ENCODE measurements at regions of chr10 and their contacts with region 1.

Region 1: GRCh38 chr10:124119946-124120345 is 26.5 kb upstream of the CHST15 start:
- DNase-seq: peak; percentile 98
- H3K4me3 ChIP-seq: no peak overlapping the region
- H3K27ac ChIP-seq: peak overlapping the region; percentile 87
- H3K4me1 ChIP-seq: peaks cover 21% of the 10 kb centered on the region
- H3K27me3 ChIP-seq: no peaks in the 10 kb centered on the region
- CTCF ChIP-seq: no peak
- POLR2A ChIP-seq: no peak

Region 2: GRCh38 chr10:124092860-124093773 is 26.8 kb before region 1 on chr10 and contains the start of gene CHST15:
- CTCF ChIA-PET with region 1: interaction called, 4 read pairs
- POLR2A ChIA-PET with region 1: no interaction called
- dilution Hi-C with region 1: no loop called
- intact Hi-C with region 1: loop called (anchors 1 kb)
- DNase-seq: peak; percentile 63
- H3K4me3 ChIP-seq: peak within 1 kb of the TSS; percentile 21 to 75 (median 25)
- H3K27ac ChIP-seq: no peak within 1 kb of the TSS
- H3K4me1 ChIP-seq: peaks cover 6% of the 10 kb centered on the region
- H3K27me3 ChIP-seq: peaks cover 4 to 47% of the 10 kb centered on the region in 2 experiments
- CTCF ChIP-seq: peak in 1 of 2 donors; percentile 29
- POLR2A ChIP-seq: no peak
- total RNA-seq, gene CHST15: 23.1 and 29.2 TPM in 2 replicates

Region 3: GRCh38 chr10:124289851-124290795 is 170.2 kb after region 1 on chr10:
- CTCF ChIA-PET with region 1: no interaction called
- POLR2A ChIA-PET with region 1: no interaction called
- dilution Hi-C with region 1: no loop called
- intact Hi-C with region 1: no loop called
- DNase-seq: no peak
- H3K4me3 ChIP-seq: no peak overlapping the region
- H3K27ac ChIP-seq: no peak overlapping the region
- H3K4me1 ChIP-seq: no peaks in the 10 kb centered on the region
- H3K27me3 ChIP-seq: no peaks in the 10 kb centered on the region
- CTCF ChIP-seq: no peak
- POLR2A ChIP-seq: no peak

Measured in endothelial cell of umbilical vein (primary cell).